MCF 10A (cell line): ENCODE measurements at regions of chr19 and their contacts with region 1.

Region 1: GRCh38 chr19:58543826-58544590 is at the start of gene TRIM28:
- DNase-seq: peak; percentile 99
- H3K4me3 Mint-ChIP-seq: peak within 1 kb of the TSS; percentile 84
- H3K27ac Mint-ChIP-seq: peak within 1 kb of the TSS; percentile 98
- H3K4me1 Mint-ChIP-seq: peaks cover 20% of the 10 kb centered on the region
- H3K27me3 Mint-ChIP-seq: peaks cover 11% of the 10 kb centered on the region
- CTCF ChIP-seq: no peak
- total RNA-seq, gene TRIM28: 236 and 290 TPM in 2 replicates

Region 2: DNA sequence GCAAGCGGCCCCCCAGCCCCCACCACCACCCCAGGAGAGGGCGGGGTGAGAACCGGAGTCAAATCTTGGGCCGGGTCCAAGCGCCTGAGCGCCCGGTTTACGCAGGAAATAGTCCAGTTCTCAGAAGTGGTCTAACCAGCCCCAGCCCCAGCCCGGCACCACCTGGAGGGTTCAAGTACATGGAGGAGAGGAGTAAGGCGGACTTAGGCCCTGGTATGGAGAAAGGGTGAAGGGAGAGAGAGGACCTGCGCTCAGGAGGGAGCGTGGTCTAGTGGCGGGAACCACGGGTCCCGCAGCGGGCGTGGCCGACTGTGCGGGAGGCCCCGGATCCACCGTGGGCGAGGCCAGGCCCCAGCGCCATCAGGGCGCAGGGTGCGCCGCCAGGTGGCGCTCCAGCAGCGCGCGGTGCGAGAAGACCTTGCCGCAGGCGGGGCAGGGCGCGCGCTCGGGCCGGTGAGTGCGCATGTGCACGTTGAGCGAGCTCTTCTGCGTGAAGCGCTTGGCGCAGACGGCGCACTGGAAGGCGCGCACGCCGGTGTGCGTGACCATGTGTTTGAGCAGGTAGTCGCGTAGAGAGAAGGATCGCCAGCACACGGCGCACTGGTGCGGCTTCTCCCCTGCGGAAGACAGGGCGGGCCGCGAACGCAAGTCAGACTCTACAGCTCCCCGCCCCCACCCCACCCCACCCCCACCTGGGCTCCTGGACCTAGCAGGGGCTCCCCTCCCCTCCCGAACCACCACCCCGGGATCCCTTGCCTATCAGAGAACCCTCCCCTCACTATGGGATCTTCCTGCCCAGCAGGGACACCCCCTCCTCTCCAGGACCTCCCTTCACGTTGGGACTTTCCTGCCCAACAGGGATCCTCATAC is 30.1 kb before region 1 on chr19:
- CTCF ChIA-PET with region 1: interaction called, 12 read pairs
- POLR2A ChIA-PET with region 1: interaction called, 194 read pairs
- intact Hi-C with region 1: loop called (anchors 1 kb)
- DNase-seq: peak; percentile 92
- H3K4me3 Mint-ChIP-seq: peak overlapping the region; percentile 77
- H3K27ac Mint-ChIP-seq: peak overlapping the region; percentile 86
- H3K4me1 Mint-ChIP-seq: peaks cover 14% of the 10 kb centered on the region
- H3K27me3 Mint-ChIP-seq: no peaks in the 10 kb centered on the region
- CTCF ChIP-seq: peak; percentile 97

Region 3: GRCh38 chr19:58558623-58559274 is 14.7 kb after region 1 on chr19:
- CTCF ChIA-PET with region 1: interaction called, 6 read pairs
- POLR2A ChIA-PET with region 1: interaction called, 119 read pairs
- intact Hi-C with region 1: no loop called
- DNase-seq: peak; percentile 99
- H3K4me3 Mint-ChIP-seq: peak overlapping the region; percentile 98
- H3K27ac Mint-ChIP-seq: peak overlapping the region; percentile 99
- H3K4me1 Mint-ChIP-seq: peaks cover 34% of the 10 kb centered on the region
- H3K27me3 Mint-ChIP-seq: no peaks in the 10 kb centered on the region
- CTCF ChIP-seq: no peak